ENCODE measurements at regions of chr4 and their contacts with region 1.

Region 1: DNA sequence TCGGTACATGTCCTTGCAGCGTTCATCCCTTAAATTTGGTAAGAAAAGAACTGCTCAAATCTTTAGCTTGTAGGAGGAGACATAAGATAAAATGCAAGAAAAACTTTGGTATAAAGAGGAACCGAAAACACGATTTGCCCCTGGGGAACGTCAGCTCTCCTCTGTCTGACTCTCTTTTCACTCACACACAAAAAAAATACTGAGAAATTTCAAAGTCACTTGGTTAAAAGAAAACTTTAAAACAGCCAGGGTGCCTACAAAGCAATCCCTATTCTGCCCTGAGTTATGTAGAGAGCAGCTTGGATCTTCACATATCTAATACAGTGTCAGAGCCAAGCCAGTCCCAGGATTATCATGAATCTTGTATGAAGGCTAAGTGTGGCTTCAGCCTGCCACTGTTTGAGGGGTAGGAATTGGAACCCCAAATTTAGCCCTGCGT is 248.5 kb upstream of the CXXC4 start:
- DNase-seq: no peak
- H3K4me3 ChIP-seq: no peak overlapping the region
- CTCF ChIP-seq: no peak
- POLR2A ChIP-seq: no peak

Region 2: GRCh38 chr4:104704881-104705280 is 38.4 kb before region 1 on chr4:
- intact Hi-C with region 1: no loop called
- DNase-seq: no peak
- H3K4me3 ChIP-seq: no peak overlapping the region
- CTCF ChIP-seq: no peak
- POLR2A ChIP-seq: no peak

Region 3: GRCh38 chr4:105453550-105454205 is 710.4 kb after region 1 on chr4:
- intact Hi-C with region 1: no loop called
- DNase-seq: no peak
- H3K4me3 ChIP-seq: no peak overlapping the region
- CTCF ChIP-seq: no peak
- POLR2A ChIP-seq: no peak

Region 4: DNA sequence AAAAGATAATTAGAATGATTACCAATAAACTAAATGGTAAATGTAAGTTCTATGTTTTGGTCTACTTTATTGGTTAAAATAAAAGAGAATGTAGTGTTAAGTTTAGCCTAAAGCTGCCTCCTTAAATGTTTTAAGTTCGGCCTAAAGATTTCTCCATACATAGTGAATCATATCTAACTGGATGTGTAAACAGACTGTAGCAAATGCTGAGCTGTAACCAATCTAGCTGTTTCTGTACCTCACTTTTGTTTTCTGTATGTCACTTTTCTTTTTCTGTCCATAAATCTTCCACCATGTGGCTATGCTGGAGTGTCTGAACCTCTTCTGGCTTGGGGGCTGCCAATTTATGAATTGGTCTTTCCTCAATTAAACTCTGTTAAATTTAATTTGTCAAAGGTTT is 1451.6 kb after region 1 on chr4:
- intact Hi-C with region 1: loop called (anchors 5 kb)
- DNase-seq: no peak
- H3K4me3 ChIP-seq: no peak overlapping the region
- CTCF ChIP-seq: no peak
- POLR2A ChIP-seq: no peak

Measured in lower leg skin (tissue), 4 donors.